Activated naive CD4-positive, alpha-beta T cell treated with anti-CD3 and anti-CD28 coated beads for 36 hours (primary cell): ENCODE measurements at regions of chr10 and their contacts with region 1.

Region 1: DNA sequence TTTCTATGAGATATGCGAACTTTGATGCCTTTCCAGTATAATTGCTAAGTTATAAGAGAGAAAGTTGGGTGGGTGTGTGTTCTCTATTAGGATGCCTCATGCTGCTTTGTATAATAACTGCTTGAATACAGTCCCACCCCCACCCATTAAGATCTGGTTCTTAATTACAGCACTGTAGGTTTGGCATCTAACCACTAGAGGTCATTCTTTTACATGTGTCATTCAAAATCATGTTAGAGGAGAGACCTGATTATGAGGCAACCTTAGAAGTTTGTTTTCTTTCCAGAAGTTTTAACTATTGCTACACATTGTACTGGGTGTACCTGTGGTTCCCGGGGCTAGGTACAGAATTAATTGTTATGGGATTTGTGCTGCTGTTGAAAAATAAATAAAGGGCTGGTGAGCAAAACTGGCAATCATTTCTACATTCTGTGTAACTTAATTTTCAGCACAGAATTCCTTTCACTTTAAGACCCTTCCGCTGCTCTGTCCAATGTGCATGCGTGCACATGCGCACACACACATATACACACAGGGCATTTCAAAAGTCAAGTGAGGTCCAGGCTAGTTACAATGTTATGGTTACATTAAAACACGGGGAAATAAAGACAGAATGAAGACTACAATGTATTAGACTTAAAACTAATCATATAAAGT is 1156.3 kb downstream of the SORCS3 start:
- DNase-seq: no peak
- H3K4me3 Mint-ChIP-seq: no peak overlapping the region
- H3K27ac Mint-ChIP-seq: no peak overlapping the region
- H3K4me1 Mint-ChIP-seq: no peaks in the 10 kb centered on the region
- H3K27me3 Mint-ChIP-seq: no peaks in the 10 kb centered on the region

Region 2: DNA sequence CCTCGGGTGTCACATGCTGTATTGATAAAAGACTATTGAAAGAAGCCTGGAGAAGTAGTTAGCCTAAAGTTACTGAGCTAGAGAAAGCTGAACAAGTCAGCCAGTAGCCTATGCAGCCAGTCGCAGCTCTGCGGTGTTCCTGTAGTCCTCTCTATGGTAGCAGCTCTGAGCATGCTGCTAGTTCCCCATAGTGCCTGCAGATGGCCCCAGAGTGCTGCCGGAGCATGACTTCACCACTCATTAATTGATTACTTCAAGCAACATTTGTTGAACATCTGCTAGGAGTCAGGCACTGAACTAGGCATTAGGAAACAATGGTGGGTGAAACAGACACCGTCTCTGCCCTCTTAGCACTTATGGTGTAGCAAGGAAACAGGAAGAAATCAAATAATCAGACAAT is 733.6 kb before region 1 on chr10:
- CTCF ChIA-PET with region 1: no interaction called
- intact Hi-C with region 1: loop called (anchors 10 kb)
- DNase-seq: peak; percentile 59
- H3K4me3 Mint-ChIP-seq: no peak overlapping the region
- H3K27ac Mint-ChIP-seq: no peak overlapping the region
- H3K4me1 Mint-ChIP-seq: peaks cover 5% of the 10 kb centered on the region
- H3K27me3 Mint-ChIP-seq: no peaks in the 10 kb centered on the region

Region 3: GRCh38 chr10:105857268-105858264 is 60.2 kb after region 1 on chr10:
- CTCF ChIA-PET with region 1: no interaction called
- intact Hi-C with region 1: loop called (anchors 5 kb)
- DNase-seq: no peak
- H3K4me3 Mint-ChIP-seq: no peak overlapping the region
- H3K27ac Mint-ChIP-seq: no peak overlapping the region
- H3K4me1 Mint-ChIP-seq: peaks cover 25% of the 10 kb centered on the region
- H3K27me3 Mint-ChIP-seq: no peaks in the 10 kb centered on the region

Region 4: GRCh38 chr10:105908701-105909100 is 111.3 kb after region 1 on chr10:
- CTCF ChIA-PET with region 1: no interaction called
- intact Hi-C with region 1: loop called (anchors 5 kb)
- DNase-seq: no peak
- H3K4me3 Mint-ChIP-seq: no peak overlapping the region
- H3K27ac Mint-ChIP-seq: no peak overlapping the region
- H3K4me1 Mint-ChIP-seq: no peaks in the 10 kb centered on the region
- H3K27me3 Mint-ChIP-seq: no peaks in the 10 kb centered on the region

Region 5: GRCh38 chr10:105950410-105950809 is 153.0 kb after region 1 on chr10:
- CTCF ChIA-PET with region 1: no interaction called
- intact Hi-C with region 1: loop called (anchors 1 kb)
- DNase-seq: peak; percentile 56
- H3K4me3 Mint-ChIP-seq: no peak overlapping the region
- H3K27ac Mint-ChIP-seq: no peak overlapping the region
- H3K4me1 Mint-ChIP-seq: no peaks in the 10 kb centered on the region
- H3K27me3 Mint-ChIP-seq: no peaks in the 10 kb centered on the region

Region 6: DNA sequence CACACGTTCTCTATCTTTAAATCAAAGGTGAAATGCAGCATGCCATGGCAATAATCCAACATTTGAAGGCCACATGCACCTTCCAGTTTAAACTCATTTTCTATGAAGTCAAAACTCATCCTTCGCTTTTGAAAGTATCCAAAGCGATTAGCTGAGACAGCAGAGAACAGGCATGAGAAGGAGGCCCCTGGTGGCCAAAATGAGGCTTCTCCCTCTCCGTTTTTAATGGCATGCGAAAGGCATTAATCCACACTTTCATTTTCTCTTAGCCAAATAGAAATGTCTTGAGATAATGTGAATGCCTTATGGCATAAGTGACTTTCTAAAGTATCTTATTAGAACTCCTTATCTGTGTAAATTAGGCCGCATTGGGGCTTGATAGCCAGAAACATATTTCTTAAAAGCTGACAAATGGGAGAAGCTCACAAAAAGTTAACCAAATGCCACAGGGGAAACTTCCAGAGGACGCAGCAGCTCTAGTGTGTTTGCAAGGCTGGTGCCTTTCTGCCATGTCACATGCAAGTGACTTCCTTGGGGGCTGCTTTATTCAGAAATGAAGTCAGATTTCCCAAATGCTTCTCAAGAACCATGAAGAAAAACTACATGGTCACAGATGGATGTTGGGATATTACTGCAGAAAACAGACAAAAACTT is 177.6 kb after region 1 on chr10:
- CTCF ChIA-PET with region 1: no interaction called
- intact Hi-C with region 1: loop called (anchors 5 kb)
- DNase-seq: peak; percentile 5
- H3K4me3 Mint-ChIP-seq: no peak overlapping the region
- H3K27ac Mint-ChIP-seq: no peak overlapping the region
- H3K4me1 Mint-ChIP-seq: no peaks in the 10 kb centered on the region
- H3K27me3 Mint-ChIP-seq: no peaks in the 10 kb centered on the region

Region 7: DNA sequence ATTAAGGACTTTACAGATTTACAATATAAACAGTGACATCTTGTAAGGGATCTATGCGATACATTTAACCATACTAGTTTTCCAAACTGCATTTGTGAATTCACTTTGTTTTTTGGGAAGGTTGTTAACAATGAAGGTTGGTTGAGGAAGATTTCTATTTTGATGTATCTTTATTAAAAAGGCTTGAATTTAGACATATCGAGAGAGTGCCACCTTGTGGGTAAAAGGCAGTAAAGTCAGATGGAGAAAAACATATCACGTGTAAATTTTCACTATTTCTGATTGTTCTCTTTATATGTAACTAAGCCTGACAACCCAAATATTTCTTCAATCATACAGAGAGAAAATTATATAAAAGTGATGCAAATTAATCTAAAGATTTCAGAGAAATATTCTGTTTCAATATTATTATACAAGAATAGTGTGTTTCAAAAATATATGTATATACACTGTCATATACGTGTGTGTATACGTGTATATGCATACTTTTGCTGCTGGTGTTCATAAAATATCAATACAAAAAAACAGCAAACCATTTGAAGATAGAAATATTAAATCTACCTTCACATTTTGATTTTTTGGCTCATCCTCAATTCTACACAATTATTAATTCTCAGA is 378.5 kb after region 1 on chr10:
- CTCF ChIA-PET with region 1: no interaction called
- intact Hi-C with region 1: loop called (anchors 1 kb)
- DNase-seq: no peak
- H3K4me3 Mint-ChIP-seq: no peak overlapping the region
- H3K27ac Mint-ChIP-seq: no peak overlapping the region
- H3K4me1 Mint-ChIP-seq: no peaks in the 10 kb centered on the region
- H3K27me3 Mint-ChIP-seq: no peaks in the 10 kb centered on the region